Activated B cell treated with CpG ODN at 0.5 μM for 24 hours (primary cell): ENCODE measurements at regions of chr20 and their contacts with region 1.

Region 1: DNA sequence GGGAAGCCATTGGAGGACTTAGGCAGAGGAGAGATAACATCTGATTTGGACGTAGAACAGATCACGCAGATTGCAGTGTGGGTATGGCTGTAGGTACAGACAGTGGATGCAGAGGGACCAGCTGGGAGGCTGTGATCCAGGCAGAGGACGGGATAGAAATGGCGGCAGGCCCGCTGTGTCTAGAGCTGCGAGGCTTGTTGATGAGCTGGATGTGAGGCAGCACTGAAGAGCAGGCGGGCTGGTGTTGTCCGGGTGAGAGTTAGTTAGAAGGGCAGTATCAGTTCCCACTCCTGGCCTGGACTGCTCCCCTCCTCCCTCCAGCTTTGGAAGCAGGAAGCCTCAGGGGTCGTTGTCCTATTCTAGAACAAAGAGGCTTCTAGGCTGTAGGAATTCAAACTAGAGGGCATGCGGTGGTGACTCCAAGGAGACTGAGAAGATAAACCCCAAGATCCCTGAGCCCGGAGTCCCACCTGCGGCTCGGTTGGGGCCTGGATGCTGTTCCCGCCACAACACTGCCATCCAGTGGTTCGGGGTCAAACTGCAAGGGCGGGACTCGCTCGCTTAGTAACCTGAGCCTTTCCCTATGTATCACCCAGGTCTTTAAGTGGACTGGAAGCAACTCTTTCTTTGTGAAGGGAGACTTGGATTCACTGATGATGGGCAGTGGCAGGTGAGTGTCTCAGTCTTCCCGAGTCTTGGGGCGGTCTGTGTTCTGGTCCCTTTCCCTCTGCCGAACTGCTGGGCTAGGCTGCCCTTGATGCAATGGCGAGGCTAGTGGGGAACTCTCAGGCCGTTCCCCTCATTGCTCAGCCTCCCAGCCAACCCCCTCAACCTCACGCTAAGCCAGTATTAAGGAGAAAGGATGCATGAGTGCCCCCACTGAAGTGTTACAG is 11.2 kb downstream of the TLDC2 start:
- DNase-seq: peak; percentile 77
- ATAC-seq: peak; percentile 99
- H3K4me3 Mint-ChIP-seq: peak overlapping the region; percentile 59
- H3K27ac Mint-ChIP-seq: no peak overlapping the region
- H3K4me1 Mint-ChIP-seq: peaks cover 7% of the 10 kb centered on the region
- H3K27me3 Mint-ChIP-seq: no peaks in the 10 kb centered on the region
- CTCF ChIP-seq: no peak

Region 2: GRCh38 chr20:36460648-36461599 is 426.2 kb before region 1 on chr20:
- CTCF ChIA-PET with region 1: no interaction called
- POLR2A ChIA-PET with region 1: interaction called, 11 read pairs
- intact Hi-C with region 1: no loop called
- DNase-seq: peak; percentile 85
- ATAC-seq: peak; percentile 75
- H3K4me3 Mint-ChIP-seq: peak overlapping the region; percentile 74
- H3K27ac Mint-ChIP-seq: peak overlapping the region; percentile 91
- H3K4me1 Mint-ChIP-seq: peaks cover 46% of the 10 kb centered on the region
- H3K27me3 Mint-ChIP-seq: no peaks in the 10 kb centered on the region
- CTCF ChIP-seq: no peak

Region 3: DNA sequence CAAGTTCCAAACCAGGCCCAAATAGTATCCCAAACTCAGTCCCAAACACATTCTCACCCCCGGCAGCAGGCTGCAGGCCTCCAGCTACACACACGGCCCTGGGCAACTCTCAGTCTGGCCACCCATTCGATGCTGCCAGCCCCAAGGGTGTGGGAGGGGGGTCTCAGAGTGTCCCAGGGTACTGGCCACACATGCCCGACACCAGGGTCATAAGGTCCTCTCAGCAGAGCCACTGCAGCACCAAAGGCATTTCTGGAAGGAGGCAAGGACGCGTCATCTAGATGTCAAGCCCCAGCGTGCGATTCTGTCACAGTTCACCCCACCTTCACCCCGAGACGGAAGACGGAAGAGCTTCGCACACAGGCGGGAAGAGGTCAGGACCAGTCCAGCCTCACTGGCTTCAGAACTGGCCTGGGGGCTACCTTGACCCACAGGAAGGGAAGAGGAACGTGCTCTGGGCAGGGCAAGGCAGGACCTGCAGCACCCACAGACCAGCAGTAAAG is 336.3 kb before region 1 on chr20:
- CTCF ChIA-PET with region 1: no interaction called
- POLR2A ChIA-PET with region 1: no interaction called
- intact Hi-C with region 1: loop called (anchors 1 kb)
- DNase-seq: no peak
- ATAC-seq: no peak
- H3K4me3 Mint-ChIP-seq: no peak overlapping the region
- H3K27ac Mint-ChIP-seq: no peak overlapping the region
- H3K4me1 Mint-ChIP-seq: peaks cover 2% of the 10 kb centered on the region
- H3K27me3 Mint-ChIP-seq: no peaks in the 10 kb centered on the region
- CTCF ChIP-seq: no peak

Region 4: GRCh38 chr20:36666181-36666740 is 220.8 kb before region 1 on chr20:
- CTCF ChIA-PET with region 1: interaction called, 13 read pairs
- POLR2A ChIA-PET with region 1: no interaction called
- intact Hi-C with region 1: loop called (anchors 1 kb)
- DNase-seq: no peak
- ATAC-seq: no peak
- H3K4me3 Mint-ChIP-seq: no peak overlapping the region
- H3K27ac Mint-ChIP-seq: no peak overlapping the region
- H3K4me1 Mint-ChIP-seq: no peaks in the 10 kb centered on the region
- H3K27me3 Mint-ChIP-seq: no peaks in the 10 kb centered on the region
- CTCF ChIP-seq: no peak

Region 5: DNA sequence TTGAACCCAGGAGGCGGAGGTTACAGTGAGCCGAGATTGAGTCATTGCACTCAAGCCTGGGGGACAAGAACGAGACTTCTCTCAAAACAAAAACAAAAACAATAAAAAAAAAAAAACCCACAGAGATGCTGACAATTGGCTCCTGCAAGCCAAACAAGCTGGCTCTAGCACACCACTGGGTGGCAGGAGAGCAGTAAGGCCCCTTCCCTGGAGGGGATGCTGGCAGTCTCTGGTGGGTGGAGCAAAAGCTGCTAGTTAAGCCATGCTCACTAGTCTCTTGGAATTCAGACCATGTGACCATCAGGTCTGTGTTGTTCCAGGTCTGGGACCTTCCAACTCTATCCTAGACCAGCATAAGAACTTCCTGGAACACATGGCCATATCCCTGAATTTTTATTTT is 94.7 kb before region 1 on chr20:
- CTCF ChIA-PET with region 1: interaction called, 7 read pairs
- POLR2A ChIA-PET with region 1: no interaction called
- intact Hi-C with region 1: loop called (anchors 1 kb)
- DNase-seq: no peak
- ATAC-seq: peak; percentile 72
- H3K4me3 Mint-ChIP-seq: no peak overlapping the region
- H3K27ac Mint-ChIP-seq: no peak overlapping the region
- H3K4me1 Mint-ChIP-seq: peaks cover 11% of the 10 kb centered on the region
- H3K27me3 Mint-ChIP-seq: no peaks in the 10 kb centered on the region
- CTCF ChIP-seq: no peak

Region 6: GRCh38 chr20:36835453-36836198 is 51.5 kb before region 1 on chr20:
- CTCF ChIA-PET with region 1: interaction called, 5 read pairs
- POLR2A ChIA-PET with region 1: no interaction called
- intact Hi-C with region 1: loop called (anchors 2 kb)
- DNase-seq: peak; percentile 72
- ATAC-seq: peak; percentile 92
- H3K4me3 Mint-ChIP-seq: peak overlapping the region; percentile 79
- H3K27ac Mint-ChIP-seq: peak overlapping the region; percentile 74
- H3K4me1 Mint-ChIP-seq: peaks cover 49% of the 10 kb centered on the region
- H3K27me3 Mint-ChIP-seq: no peaks in the 10 kb centered on the region
- CTCF ChIP-seq: no peak

Region 7: DNA sequence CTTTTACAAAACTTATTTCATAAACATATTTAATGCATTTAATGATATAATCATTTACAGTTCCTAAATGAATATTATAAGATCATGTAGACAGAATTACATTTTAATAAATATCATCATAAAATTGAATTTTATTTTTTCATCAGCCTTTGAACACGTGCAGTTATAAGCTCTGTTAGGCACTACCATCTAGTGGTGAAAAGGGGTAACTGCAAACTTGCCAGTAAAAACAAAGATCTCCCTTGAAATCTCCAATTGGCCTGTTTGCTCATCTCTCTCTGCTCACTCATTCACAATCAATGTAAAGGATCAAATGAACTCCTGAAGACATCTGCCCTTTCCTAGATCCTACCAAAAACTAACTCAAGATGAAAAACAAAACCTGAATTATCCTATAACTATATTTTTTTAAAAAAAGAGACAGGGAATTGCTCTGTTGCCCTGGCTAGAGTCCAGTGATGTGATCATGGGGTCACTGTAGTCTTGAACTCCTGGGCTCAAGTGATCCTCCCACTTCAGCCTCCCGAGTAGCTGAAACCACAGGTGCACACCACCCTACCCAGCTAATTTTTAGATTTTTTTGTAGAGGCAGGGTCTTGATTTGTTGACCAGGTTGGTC is 32.7 kb after region 1 on chr20:
- CTCF ChIA-PET with region 1: interaction called, 6 read pairs
- POLR2A ChIA-PET with region 1: no interaction called
- intact Hi-C with region 1: loop called (anchors 2 kb)
- DNase-seq: no peak
- ATAC-seq: peak; percentile 71
- H3K4me3 Mint-ChIP-seq: no peak overlapping the region
- H3K27ac Mint-ChIP-seq: no peak overlapping the region
- H3K4me1 Mint-ChIP-seq: no peaks in the 10 kb centered on the region
- H3K27me3 Mint-ChIP-seq: no peaks in the 10 kb centered on the region
- CTCF ChIP-seq: peak; percentile 91